ENCODE measurements at regions of chr1 and their contacts with region 1.

Region 1: DNA sequence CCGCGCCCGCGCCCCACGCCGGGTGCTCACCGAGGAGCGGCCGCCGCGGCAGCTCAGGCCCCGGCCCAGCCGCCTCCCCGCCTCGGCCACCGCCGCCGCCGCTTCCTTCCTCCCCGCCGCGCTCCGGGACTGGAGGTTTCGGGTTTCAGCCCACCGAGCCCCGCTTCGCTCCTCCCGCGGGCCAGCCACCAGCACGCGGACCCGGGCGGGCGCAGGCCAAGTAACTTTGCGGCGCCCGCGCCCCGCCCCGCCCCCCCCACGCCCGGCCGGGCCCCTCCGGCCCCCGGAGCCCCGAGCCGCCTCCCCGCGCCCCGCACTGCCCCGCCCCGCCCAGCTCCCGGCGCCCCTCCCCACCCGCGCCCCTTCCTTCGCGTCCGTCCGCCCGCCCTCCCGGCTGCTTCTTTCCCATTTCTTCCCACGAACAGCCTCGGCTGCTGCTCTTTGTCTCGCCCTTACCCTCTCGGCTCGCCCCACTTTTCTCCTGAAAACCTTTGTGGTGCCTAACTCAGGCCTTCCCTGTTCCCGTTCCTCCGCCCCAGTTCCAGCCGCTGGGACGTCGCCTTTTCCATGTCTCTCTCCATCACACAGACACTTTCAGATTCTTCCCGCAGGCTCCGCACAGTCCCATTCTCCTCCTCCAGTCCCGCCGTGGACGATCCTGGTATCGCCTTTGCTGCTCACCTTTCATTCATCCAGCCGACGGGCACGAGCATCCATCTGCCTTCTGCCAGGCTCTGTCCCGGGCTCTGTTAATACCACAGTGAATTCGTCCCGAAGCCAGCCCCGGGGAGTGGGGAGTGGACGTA is at the start of gene GPR161:
- DNase-seq: peak; percentile 44
- H3K4me3 ChIP-seq: peak within 1 kb of the TSS; percentile 55 to 81 (median 69)
- H3K27ac ChIP-seq: peak within 1 kb of the TSS; percentile 64 to 86 (median 80)
- H3K4me1 ChIP-seq: peaks cover 13 to 29% (median 24%) of the 10 kb centered on the region in 4 donors
- H3K27me3 ChIP-seq: peaks cover 5% of the 10 kb centered on the region
- CTCF ChIP-seq: no peak
- EP300 ChIP-seq: no peak
- POLR2A ChIP-seq: no peak
- total RNA-seq, gene GPR161: 0.60 to 3.3 (median 2.8) TPM

Region 2: GRCh38 chr1:168092566-168093355 is 44.2 kb before region 1 on chr1:
- in situ Hi-C with region 1: no loop called
- intact Hi-C with region 1: loop called (anchors 5 kb)
- DNase-seq: no peak
- H3K4me3 ChIP-seq: no peak overlapping the region
- H3K27ac ChIP-seq: no peak overlapping the region
- H3K4me1 ChIP-seq: peaks cover 3 to 34% (median 23%) of the 10 kb centered on the region in 4 donors
- H3K27me3 ChIP-seq: no peaks in the 10 kb centered on the region
- CTCF ChIP-seq: peak in 1 of 5 experiments; percentile 11
- EP300 ChIP-seq: no peak
- POLR2A ChIP-seq: no peak